ENCODE measurements at regions of chr1 and their contacts with region 1.

Region 1: GRCh38 chr1:63615768-63616420 is 22.7 kb downstream of the PGM1 start:
- DNase-seq: peak in 5 of 10 donors; percentile 22 to 63 (median 37)
- H3K4me3 ChIP-seq: no peak overlapping the region
- H3K27ac ChIP-seq: no peak overlapping the region
- H3K27me3 ChIP-seq: no peaks in the 10 kb centered on the region
- CTCF ChIP-seq: peak; percentile 70 to 96 (median 90)

Region 2: GRCh38 chr1:63773815-63774616 is 158.1 kb after region 1 on chr1 and contains the start of gene ROR1:
- intact Hi-C with region 1: loop called in 1 of 2 experiments (anchors 10 kb)
- DNase-seq: peak; percentile 75 to 94 (median 81)
- H3K4me3 ChIP-seq: peak within 1 kb of the TSS; percentile 55 to 87 (median 72)
- H3K27ac ChIP-seq: peak within 1 kb of the TSS in 46 of 59 donors; percentile 31 to 89 (median 74)
- H3K27me3 ChIP-seq: peaks cover 0 to 12% (median 0%) of the 10 kb centered on the region in 45 donors
- CTCF ChIP-seq: peak in 55 of 56 donors; percentile 30 to 87 (median 69)
- total RNA-seq, gene ROR1: 0.53 to 5.6 (median 3.1) TPM

Region 3: GRCh38 chr1:64163970-64164369 is 548.1 kb after region 1 on chr1:
- intact Hi-C with region 1: loop called in 1 of 2 experiments (anchors 10 kb)
- DNase-seq: no peak
- H3K4me3 ChIP-seq: no peak overlapping the region
- H3K27ac ChIP-seq: no peak overlapping the region
- H3K27me3 ChIP-seq: no peaks in the 10 kb centered on the region
- CTCF ChIP-seq: peak in 52 of 56 donors; percentile 24 to 71 (median 52)

Measured in dorsolateral prefrontal cortex (tissue), 120 donors.